ENCODE measurements at regions of chr17 and their contacts with region 1.

Region 1: GRCh38 chr17:31015639-31016038 is 44.8 kb downstream of the RNF135 start:
- DNase-seq: peak in 1 of 4 experiments; percentile 34
- ATAC-seq: peak; percentile 78
- H3K4me3 ChIP-seq: no peak overlapping the region
- H3K27ac ChIP-seq: no peak overlapping the region
- H3K4me1 ChIP-seq: no peaks in the 10 kb centered on the region
- H3K27me3 ChIP-seq: no peaks in the 10 kb centered on the region
- CTCF ChIP-seq: peak in 2 of 3 experiments; percentile 27 to 49; a peak in 3 of 6 replicates
- EP300 ChIP-seq: no peak
- POLR2A ChIP-seq: no peak
- RAD21 ChIP-seq: peak; percentile 26 to 79; a peak in 3 of 4 replicates

Region 2: DNA sequence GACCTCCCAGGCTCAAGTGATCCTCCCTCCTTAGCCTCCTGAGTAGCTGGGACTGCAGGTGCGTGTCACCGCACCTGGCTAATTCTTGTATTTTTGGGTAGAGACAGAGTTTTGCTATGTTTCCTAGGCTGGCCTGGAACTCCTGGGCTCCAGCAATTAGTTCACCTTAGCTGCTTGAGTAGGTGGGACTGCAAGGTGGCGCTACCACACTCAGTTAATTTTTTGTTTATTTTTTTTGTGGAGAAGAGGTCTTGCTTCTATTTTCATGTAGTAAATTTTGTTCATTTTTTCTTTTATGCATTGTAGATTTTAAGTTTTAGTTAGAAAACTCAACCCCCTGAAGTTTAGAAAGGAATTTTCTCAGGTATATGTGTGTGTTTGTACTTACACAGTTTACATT is 23.1 kb before region 1 on chr17:
- CTCF ChIA-PET with region 1: no interaction called
- POLR2A ChIA-PET with region 1: no interaction called
- in situ Hi-C with region 1: no loop called
- intact Hi-C with region 1: no loop called
- DNase-seq: no peak
- ATAC-seq: no peak
- H3K4me3 ChIP-seq: no peak overlapping the region
- H3K27ac ChIP-seq: no peak overlapping the region
- H3K4me1 ChIP-seq: no peaks in the 10 kb centered on the region
- H3K27me3 ChIP-seq: peaks cover 0 to 10% of the 10 kb centered on the region in 2 experiments; a peak in 3 of 5 replicates
- CTCF ChIP-seq: peak; percentile 29 to 33 (median 33); a peak in 3 of 6 replicates
- EP300 ChIP-seq: no peak
- POLR2A ChIP-seq: no peak
- RAD21 ChIP-seq: no peak

Region 3: GRCh38 chr17:31068291-31068690 is 52.7 kb after region 1 on chr17:
- CTCF ChIA-PET with region 1: no interaction called
- POLR2A ChIA-PET with region 1: no interaction called
- in situ Hi-C with region 1: no loop called
- intact Hi-C with region 1: loop called (anchors 1 kb)
- DNase-seq: peak; percentile 46 to 74 (median 54)
- ATAC-seq: peak; percentile 91
- H3K4me3 ChIP-seq: no peak overlapping the region
- H3K27ac ChIP-seq: no peak overlapping the region
- H3K4me1 ChIP-seq: no peaks in the 10 kb centered on the region
- H3K27me3 ChIP-seq: no peaks in the 10 kb centered on the region; a peak in 1 of 5 replicates
- CTCF ChIP-seq: peak; percentile 67 to 97 (median 86)
- EP300 ChIP-seq: no peak
- POLR2A ChIP-seq: no peak
- RAD21 ChIP-seq: peak; percentile 32 to 78; a peak in 3 of 4 replicates

Region 4: DNA sequence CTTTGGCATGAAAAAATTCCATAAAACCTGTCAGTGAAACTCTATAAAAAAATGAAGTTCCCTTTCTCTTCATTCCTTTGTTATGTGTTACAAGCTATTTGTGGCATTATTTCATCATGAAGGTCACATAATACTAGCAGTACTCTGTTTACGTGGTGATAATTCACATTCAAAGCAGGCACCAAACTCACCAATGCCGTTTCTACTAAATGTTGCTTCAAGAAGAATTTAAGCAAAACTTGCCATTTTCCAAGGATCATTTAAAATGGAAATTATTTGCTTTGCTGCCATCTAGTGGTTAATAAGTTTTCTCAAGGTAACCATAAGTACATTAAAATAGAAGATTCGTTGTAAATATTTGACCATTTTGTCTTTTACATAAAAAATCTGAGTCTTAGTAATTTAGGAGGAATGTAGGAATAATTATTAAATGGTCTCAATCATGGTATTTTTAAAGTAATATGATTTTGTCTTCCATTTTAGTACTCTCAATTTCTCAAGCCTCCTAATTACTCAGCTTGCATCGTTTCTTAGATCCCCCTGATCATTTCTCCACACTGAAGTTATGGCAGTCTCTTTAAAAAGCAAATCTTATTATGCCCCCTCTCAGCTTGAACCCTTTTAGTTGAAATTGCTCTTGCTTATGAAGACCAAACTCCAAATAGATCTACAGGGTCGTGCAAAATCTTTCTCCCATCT is 200.6 kb after region 1 on chr17:
- CTCF ChIA-PET with region 1: interaction called, 4 read pairs
- POLR2A ChIA-PET with region 1: no interaction called
- in situ Hi-C with region 1: loop called (anchors 5 kb)
- intact Hi-C with region 1: loop called (anchors 2 kb)
- DNase-seq: peak in 2 of 4 experiments; percentile 17 to 41
- ATAC-seq: 0 out of 3 replicates have a peak, but pooled peaks have one; percentile 33
- H3K4me3 ChIP-seq: no peak overlapping the region
- H3K27ac ChIP-seq: no peak overlapping the region
- H3K4me1 ChIP-seq: no peaks in the 10 kb centered on the region
- H3K27me3 ChIP-seq: no peaks in the 10 kb centered on the region
- CTCF ChIP-seq: peak; percentile 15 to 67 (median 42); a peak in 4 of 6 replicates
- EP300 ChIP-seq: no peak
- POLR2A ChIP-seq: no peak
- RAD21 ChIP-seq: peak; percentile 64 to 83

Region 5: DNA sequence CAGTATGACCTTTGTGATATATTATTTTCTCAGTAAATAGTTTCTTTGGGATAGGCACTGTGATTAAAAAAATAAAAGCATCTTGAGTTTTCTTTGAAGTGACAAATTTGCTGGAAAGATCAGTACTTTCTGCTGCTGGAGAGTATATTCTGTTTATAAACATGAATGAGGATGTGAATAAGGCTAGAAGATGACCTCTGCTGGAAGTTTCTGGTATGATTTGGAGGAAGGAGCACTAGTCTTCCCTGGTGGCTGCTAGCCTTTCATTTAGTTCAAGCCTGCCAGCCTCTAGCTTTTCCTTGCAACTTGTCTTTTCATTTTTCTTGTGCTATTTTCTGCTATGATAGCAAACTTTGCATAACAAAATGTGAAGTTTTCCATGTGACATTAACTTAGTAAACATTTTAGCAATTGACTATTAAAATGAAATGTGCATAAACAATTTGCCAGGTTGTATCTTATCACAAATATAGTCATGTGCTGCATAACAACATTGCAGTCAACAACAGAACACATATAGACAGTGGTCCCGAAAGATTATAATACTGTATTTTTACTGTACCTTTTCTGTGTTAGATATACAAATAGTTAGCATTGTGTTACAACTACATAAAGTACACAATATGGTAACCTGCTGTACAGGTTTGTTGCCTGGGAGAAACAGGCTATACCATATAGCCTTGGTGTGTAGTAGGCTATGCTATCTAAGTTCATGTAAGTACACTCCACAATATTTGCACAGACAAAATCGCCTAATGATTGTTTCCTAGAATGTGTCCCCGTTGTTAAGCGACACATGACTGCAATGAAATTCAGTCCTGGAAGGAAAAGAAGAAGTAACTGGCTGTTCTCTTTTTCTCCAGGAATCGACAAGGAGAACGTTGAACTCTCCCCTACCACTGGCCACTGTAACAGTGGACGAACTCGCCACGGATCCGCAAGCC is 357.8 kb after region 1 on chr17:
- CTCF ChIA-PET with region 1: interaction called, 4 read pairs
- POLR2A ChIA-PET with region 1: no interaction called
- in situ Hi-C with region 1: no loop called
- intact Hi-C with region 1: loop called (anchors 1 kb)
- DNase-seq: peak; percentile 26 to 58 (median 42)
- ATAC-seq: peak; percentile 86
- H3K4me3 ChIP-seq: no peak overlapping the region
- H3K27ac ChIP-seq: no peak overlapping the region
- H3K4me1 ChIP-seq: no peaks in the 10 kb centered on the region
- H3K27me3 ChIP-seq: no peaks in the 10 kb centered on the region
- CTCF ChIP-seq: peak; percentile 53 to 68 (median 56); a peak in 5 of 6 replicates
- EP300 ChIP-seq: no peak
- POLR2A ChIP-seq: no peak
- RAD21 ChIP-seq: peak; percentile 49 to 79

Region 6: GRCh38 chr17:31388770-31389661 is 373.4 kb after region 1 on chr17:
- CTCF ChIA-PET with region 1: no interaction called
- POLR2A ChIA-PET with region 1: no interaction called
- in situ Hi-C with region 1: loop called (anchors 10 kb)
- intact Hi-C with region 1: no loop called
- DNase-seq: peak; percentile 45 to 74 (median 70)
- ATAC-seq: peak; percentile 85
- H3K4me3 ChIP-seq: no peak overlapping the region
- H3K27ac ChIP-seq: no peak overlapping the region
- H3K4me1 ChIP-seq: peaks cover 0 to 21% of the 10 kb centered on the region in 2 experiments; a peak in 3 of 5 replicates
- H3K27me3 ChIP-seq: peaks cover 17 to 45% of the 10 kb centered on the region in 2 experiments; a peak in 4 of 5 replicates
- CTCF ChIP-seq: peak; percentile 77 to 86 (median 82)
- EP300 ChIP-seq: no peak
- POLR2A ChIP-seq: no peak
- RAD21 ChIP-seq: peak; percentile 45 to 69; a peak in 3 of 4 replicates

Region 7: DNA sequence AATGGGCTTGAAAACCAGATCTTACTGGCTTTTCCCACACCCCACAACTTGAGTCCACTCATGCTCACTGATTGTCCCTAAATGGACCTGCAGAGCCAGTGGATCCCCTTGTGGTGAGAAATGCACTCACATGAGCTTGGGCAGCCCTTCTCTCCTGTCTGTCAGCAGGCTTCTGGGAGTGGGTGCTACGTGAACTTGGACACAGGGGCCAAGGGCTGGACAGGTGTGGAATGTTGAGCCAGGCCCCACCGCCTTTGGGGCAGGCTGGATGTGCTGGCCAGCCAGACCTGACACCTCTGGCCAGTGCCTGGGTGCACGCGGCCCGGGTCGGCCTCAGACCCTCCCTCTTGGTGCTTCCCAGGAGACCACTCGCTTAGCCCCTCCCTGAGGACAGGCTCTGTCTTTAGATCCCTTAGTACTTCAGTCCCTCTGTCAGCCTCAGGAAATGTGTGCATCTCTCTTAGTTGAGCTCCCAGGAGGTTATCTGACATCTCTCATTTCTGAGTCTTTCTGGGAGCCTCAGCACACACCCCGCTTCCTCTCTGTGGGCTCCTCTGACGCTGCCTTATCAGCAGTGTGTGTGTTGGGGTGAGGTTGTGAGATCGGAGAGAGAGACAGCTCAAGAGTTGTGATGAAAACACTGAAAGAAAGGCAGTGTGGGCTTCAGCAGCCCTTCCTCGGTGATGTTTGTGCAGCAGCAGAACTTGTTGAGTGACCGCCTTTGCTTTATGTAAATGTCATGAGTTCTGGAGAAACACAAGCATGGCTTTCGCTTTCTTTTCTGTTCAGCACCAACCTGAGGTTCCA is 492.9 kb after region 1 on chr17:
- CTCF ChIA-PET with region 1: no interaction called
- POLR2A ChIA-PET with region 1: no interaction called
- in situ Hi-C with region 1: loop called (anchors 10 kb)
- intact Hi-C with region 1: no loop called
- DNase-seq: peak in 3 of 4 experiments; percentile 30 to 86 (median 69)
- ATAC-seq: peak; percentile 89
- H3K4me3 ChIP-seq: no peak overlapping the region
- H3K27ac ChIP-seq: peak overlapping the region; percentile 71
- H3K4me1 ChIP-seq: peaks cover 27 to 34% of the 10 kb centered on the region in 2 experiments
- H3K27me3 ChIP-seq: no peaks in the 10 kb centered on the region
- CTCF ChIP-seq: peak; percentile 52 to 65 (median 58)
- EP300 ChIP-seq: peak; percentile 33; the same call in 1 of the 2 replicates
- POLR2A ChIP-seq: no peak
- RAD21 ChIP-seq: peak in 1 of 2 experiments; percentile 48; a peak in 2 of 4 replicates

Region 8: DNA sequence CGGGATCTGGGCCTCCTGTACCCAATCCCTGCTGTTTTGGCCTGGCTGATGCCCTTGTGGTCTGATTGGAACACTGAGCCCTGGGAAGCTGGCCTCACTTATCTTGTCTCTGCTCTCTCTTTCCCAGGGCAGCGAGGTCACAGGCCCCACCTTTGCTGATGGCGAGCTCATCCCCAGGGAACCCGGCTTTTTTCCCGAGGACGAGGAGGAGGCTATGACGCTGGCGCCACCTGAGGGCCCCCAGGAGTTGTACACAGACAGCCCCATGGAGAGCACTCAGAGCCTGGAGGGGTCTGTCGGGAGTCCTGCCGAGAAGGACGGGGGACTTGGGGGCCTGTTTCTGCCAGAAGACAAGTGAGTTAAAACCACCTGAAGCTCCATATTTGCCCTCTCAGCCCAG is 501.9 kb after region 1 on chr17:
- CTCF ChIA-PET with region 1: no interaction called
- POLR2A ChIA-PET with region 1: no interaction called
- in situ Hi-C with region 1: no loop called
- intact Hi-C with region 1: loop called (anchors 5 kb)
- DNase-seq: peak in 3 of 4 experiments; percentile 49 to 63 (median 58)
- ATAC-seq: peak; percentile 68
- H3K4me3 ChIP-seq: no peak overlapping the region
- H3K27ac ChIP-seq: no peak overlapping the region
- H3K4me1 ChIP-seq: peaks cover 3 to 14% of the 10 kb centered on the region in 2 experiments; a peak in 2 of 5 replicates
- H3K27me3 ChIP-seq: no peaks in the 10 kb centered on the region
- CTCF ChIP-seq: peak; percentile 63 to 73 (median 66)
- EP300 ChIP-seq: no peak
- POLR2A ChIP-seq: no peak
- RAD21 ChIP-seq: peak; percentile 70 to 88